Activated CD4-positive, alpha-beta memory T cell treated with anti-CD3 and anti-CD28 coated beads for 36 hours (primary cell): ENCODE measurements at regions of chr11 and their contacts with region 1.

Region 1: GRCh38 chr11:112280268-112281126 is 19.8 kb upstream of the PLET1 start:
- DNase-seq: peak; percentile 73
- H3K4me3 Mint-ChIP-seq: peak overlapping the region; percentile 84
- H3K27ac Mint-ChIP-seq: peak overlapping the region; percentile 65
- H3K4me1 Mint-ChIP-seq: peaks cover 15% of the 10 kb centered on the region
- H3K27me3 Mint-ChIP-seq: no peaks in the 10 kb centered on the region

Region 2: DNA sequence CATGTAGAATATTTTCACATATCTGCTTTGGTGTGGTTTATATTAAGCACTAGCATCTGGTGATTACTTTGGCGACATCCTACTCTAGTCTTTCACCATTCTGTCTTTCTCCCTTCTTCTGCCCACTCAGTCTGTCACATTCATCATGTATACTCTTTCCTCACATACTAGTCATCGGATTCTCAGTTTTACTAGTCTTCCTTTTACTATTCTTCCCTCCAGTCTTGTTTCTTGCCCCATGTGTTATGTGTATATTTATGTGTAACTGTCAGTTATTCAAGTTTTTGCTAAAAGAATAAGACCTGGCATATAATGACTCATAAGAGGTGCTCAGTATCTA is 347.9 kb before region 1 on chr11:
- CTCF ChIA-PET with region 1: no interaction called
- POLR2A ChIA-PET with region 1: no interaction called
- intact Hi-C with region 1: loop called (anchors 1 kb)
- DNase-seq: no peak
- H3K4me3 Mint-ChIP-seq: peak overlapping the region; percentile 53
- H3K27ac Mint-ChIP-seq: peak overlapping the region; percentile 87
- H3K4me1 Mint-ChIP-seq: peaks cover 32% of the 10 kb centered on the region
- H3K27me3 Mint-ChIP-seq: no peaks in the 10 kb centered on the region

Region 3: GRCh38 chr11:112219476-112220232 is 60.8 kb before region 1 on chr11:
- CTCF ChIA-PET with region 1: interaction called, 238 read pairs
- POLR2A ChIA-PET with region 1: no interaction called
- intact Hi-C with region 1: loop called (anchors 1 kb)
- DNase-seq: peak; percentile 25
- H3K4me3 Mint-ChIP-seq: no peak overlapping the region
- H3K27ac Mint-ChIP-seq: no peak overlapping the region
- H3K4me1 Mint-ChIP-seq: no peaks in the 10 kb centered on the region
- H3K27me3 Mint-ChIP-seq: no peaks in the 10 kb centered on the region

Region 4: GRCh38 chr11:112231952-112232351 is 48.5 kb before region 1 on chr11:
- CTCF ChIA-PET with region 1: interaction called, 26 read pairs
- POLR2A ChIA-PET with region 1: interaction called, 3 read pairs
- intact Hi-C with region 1: loop called (anchors 2 kb)
- DNase-seq: no peak
- H3K4me3 Mint-ChIP-seq: no peak overlapping the region
- H3K27ac Mint-ChIP-seq: no peak overlapping the region
- H3K4me1 Mint-ChIP-seq: peaks cover 17% of the 10 kb centered on the region
- H3K27me3 Mint-ChIP-seq: no peaks in the 10 kb centered on the region

Region 5: DNA sequence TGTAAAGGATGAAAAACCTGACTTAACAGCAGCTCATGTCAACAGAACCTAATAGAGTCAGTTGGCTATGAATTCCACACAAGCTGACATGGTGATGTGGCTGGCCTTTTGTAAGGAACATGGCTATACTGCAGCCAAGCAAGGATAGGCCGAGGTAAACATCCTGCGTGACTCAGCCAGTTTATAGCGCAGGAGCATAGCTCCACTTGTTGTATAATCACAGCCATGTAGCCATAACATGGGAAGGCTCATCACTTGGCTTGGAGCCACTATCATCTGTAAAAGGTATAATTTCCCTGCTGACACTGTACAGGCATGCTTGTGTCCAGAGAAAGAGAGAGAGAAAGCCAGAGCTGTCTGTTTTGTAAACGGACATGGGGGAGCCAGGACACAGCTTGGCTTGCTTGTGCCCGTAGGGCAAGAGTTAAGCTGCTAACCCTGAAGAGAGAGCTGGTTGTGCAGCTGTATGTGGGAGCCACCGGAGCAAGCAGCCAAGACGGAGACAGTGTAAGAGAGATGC is 84.5 kb after region 1 on chr11:
- CTCF ChIA-PET with region 1: no interaction called
- POLR2A ChIA-PET with region 1: no interaction called
- intact Hi-C with region 1: no loop called
- DNase-seq: no peak
- H3K4me3 Mint-ChIP-seq: no peak overlapping the region
- H3K27ac Mint-ChIP-seq: no peak overlapping the region
- H3K4me1 Mint-ChIP-seq: no peaks in the 10 kb centered on the region
- H3K27me3 Mint-ChIP-seq: no peaks in the 10 kb centered on the region

Region 6: GRCh38 chr11:112377946-112378345 is 97.4 kb after region 1 on chr11:
- CTCF ChIA-PET with region 1: no interaction called
- POLR2A ChIA-PET with region 1: no interaction called
- intact Hi-C with region 1: no loop called
- DNase-seq: no peak
- H3K4me3 Mint-ChIP-seq: no peak overlapping the region
- H3K27ac Mint-ChIP-seq: no peak overlapping the region
- H3K4me1 Mint-ChIP-seq: no peaks in the 10 kb centered on the region
- H3K27me3 Mint-ChIP-seq: no peaks in the 10 kb centered on the region

Region 7: GRCh38 chr11:112525270-112525669 is 244.8 kb after region 1 on chr11:
- CTCF ChIA-PET with region 1: no interaction called
- POLR2A ChIA-PET with region 1: no interaction called
- intact Hi-C with region 1: no loop called
- DNase-seq: peak; percentile 36
- H3K4me3 Mint-ChIP-seq: no peak overlapping the region
- H3K27ac Mint-ChIP-seq: no peak overlapping the region
- H3K4me1 Mint-ChIP-seq: peaks cover 24% of the 10 kb centered on the region
- H3K27me3 Mint-ChIP-seq: peaks cover 3% of the 10 kb centered on the region